Heart right ventricle (tissue), 16 donors: ENCODE measurements at regions of chr3 and their contacts with region 1.

Region 1: DNA sequence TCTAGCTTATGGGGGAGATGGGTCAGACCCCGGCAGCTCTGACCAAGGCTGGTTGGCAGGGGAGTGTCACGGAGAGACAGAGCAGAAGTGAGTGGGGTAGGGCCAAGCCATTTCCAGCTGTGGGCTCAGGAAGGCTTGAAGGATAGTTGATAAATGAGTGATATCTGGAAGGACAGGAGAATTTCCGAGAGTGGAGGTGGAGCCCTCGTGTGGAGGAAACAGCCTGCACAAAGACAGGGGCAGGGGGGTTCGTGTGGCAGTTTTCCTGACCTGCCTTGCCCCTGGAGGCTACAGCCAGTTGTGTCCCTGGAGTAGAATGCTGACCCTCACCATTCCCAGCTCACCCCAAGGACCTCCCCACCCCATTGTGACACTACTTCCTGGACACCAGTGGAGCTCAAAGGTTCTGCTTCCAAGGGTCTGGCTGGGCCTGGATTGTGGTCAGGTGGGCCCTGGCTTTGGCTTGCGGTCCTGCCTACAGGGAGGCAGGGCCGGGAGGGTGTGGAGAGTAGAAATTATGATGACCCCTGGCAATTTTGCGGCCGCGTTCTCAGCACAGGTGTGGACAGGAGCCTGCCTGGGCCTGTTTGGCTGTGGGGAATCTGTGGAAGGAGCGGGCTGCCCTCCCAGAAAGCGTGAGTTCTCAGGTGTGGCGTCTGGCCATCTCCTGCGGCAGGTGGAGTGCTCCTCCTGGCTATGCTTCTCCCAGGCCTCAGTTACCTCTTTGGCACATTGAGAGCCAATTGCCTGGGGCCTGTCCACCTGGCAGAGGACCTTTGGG is at the start of gene SLC22A14:
- DNase-seq: no peak
- ATAC-seq: no peak
- H3K4me3 ChIP-seq: no peak within 1 kb of the TSS
- H3K27ac ChIP-seq: no peak within 1 kb of the TSS
- H3K4me1 ChIP-seq: no peaks in the 10 kb centered on the region
- H3K27me3 ChIP-seq: no peaks in the 10 kb centered on the region
- CTCF ChIP-seq: no peak
- total RNA-seq, gene SLC22A14: 0.17 to 0.28 TPM in 2 of 10 donors, not detected in the others

Region 2: DNA sequence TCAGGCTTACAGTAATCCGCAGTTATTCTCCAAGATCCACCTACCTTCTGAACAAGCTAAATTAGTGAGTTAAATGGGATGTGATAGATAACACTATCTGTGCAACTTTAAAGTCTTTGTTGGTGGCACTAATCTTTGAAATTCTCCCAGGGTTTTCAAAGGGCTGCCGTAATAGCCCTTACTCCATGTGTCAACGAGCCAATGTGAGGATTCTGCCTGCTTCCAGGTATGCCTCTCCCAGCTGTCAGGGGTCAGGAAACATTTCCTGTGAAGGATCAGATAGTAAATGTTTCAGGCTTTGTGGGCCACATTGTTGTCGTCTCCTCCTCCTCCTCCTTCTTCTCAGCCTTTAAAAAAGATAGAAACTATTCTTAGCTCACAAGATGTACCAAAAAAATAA is 387.6 kb after region 1 on chr3:
- intact Hi-C with region 1: loop called in 1 of 10 experiments (anchors 5 kb)
- DNase-seq: no peak
- ATAC-seq: no peak
- H3K4me3 ChIP-seq: no peak overlapping the region
- H3K27ac ChIP-seq: no peak overlapping the region
- H3K4me1 ChIP-seq: no peaks in the 10 kb centered on the region
- H3K27me3 ChIP-seq: peaks cover 0 to 4% (median 0%) of the 10 kb centered on the region in 7 donors
- CTCF ChIP-seq: no peak